HepG2 (cell line): ENCODE measurements at regions of chr15 and their contacts with region 1.

Region 1: GRCh38 chr15:87154767-87155166 is 1075.1 kb downstream of the AGBL1 start:
- DNase-seq: no peak
- ATAC-seq: no peak
- H3K4me3 ChIP-seq: no peak overlapping the region
- H3K27ac ChIP-seq: no peak overlapping the region
- H3K4me1 ChIP-seq: no peaks in the 10 kb centered on the region
- H3K27me3 ChIP-seq: no peaks in the 10 kb centered on the region
- CTCF ChIP-seq: no peak
- EP300 ChIP-seq: no peak
- POLR2A ChIP-seq: no peak
- RAD21 ChIP-seq: no peak

Region 2: DNA sequence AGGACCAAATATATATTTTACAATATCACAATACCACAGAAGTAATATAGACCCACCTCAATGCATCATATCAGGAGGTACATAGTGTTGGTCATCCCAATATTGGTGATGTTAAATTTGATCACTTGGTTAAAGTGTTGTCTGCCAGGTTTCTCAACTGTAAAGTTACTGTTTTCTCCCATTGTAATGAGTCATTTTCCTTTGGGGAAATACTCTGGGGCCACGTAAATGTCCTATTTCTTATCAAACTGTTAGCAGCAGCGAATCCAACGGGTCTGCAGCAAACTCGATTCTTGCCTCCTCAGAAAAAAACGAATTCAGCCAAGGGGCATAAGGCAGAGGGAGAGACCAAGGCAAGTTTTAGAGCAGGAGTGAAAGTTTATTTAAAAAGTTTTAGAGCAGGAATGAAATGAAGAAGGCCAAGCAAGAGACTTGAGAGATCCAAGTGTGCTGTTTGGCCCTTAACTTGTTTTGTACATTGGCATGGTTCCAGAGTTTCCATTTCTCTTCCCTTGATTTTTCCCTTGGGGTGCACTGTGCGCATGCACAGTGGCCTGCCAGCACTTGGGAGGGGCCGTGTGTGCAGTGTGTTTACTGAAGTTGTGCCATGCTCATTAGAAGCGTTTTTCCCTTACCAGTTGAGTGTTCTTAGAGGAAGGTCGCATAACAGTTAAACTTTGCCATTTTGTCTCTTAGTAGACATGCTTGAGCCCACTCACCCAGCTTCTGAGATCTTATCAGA is 562.6 kb before region 1 on chr15:
- CTCF ChIA-PET with region 1: no interaction called
- POLR2A ChIA-PET with region 1: no interaction called
- in situ Hi-C with region 1: no loop called
- intact Hi-C with region 1: loop called (anchors 10 kb)
- DNase-seq: no peak
- ATAC-seq: no peak
- H3K4me3 ChIP-seq: no peak overlapping the region
- H3K27ac ChIP-seq: no peak overlapping the region
- H3K4me1 ChIP-seq: no peaks in the 10 kb centered on the region
- H3K27me3 ChIP-seq: no peaks in the 10 kb centered on the region
- CTCF ChIP-seq: no peak
- EP300 ChIP-seq: no peak
- POLR2A ChIP-seq: no peak
- RAD21 ChIP-seq: no peak